Activated CD4-positive, alpha-beta memory T cell treated with anti-CD3 and anti-CD28 coated beads for 36 hours (primary cell): ENCODE measurements at regions of chr20 and their contacts with region 1.

Region 1: GRCh38 chr20:10219452-10219791 is 792 bp downstream of the SNAP25 start:
- DNase-seq: peak; percentile 69
- H3K4me3 Mint-ChIP-seq: no peak overlapping the region
- H3K27ac Mint-ChIP-seq: no peak overlapping the region
- H3K4me1 Mint-ChIP-seq: peaks cover 15% of the 10 kb centered on the region
- H3K27me3 Mint-ChIP-seq: peaks cover 45% of the 10 kb centered on the region

Region 2: DNA sequence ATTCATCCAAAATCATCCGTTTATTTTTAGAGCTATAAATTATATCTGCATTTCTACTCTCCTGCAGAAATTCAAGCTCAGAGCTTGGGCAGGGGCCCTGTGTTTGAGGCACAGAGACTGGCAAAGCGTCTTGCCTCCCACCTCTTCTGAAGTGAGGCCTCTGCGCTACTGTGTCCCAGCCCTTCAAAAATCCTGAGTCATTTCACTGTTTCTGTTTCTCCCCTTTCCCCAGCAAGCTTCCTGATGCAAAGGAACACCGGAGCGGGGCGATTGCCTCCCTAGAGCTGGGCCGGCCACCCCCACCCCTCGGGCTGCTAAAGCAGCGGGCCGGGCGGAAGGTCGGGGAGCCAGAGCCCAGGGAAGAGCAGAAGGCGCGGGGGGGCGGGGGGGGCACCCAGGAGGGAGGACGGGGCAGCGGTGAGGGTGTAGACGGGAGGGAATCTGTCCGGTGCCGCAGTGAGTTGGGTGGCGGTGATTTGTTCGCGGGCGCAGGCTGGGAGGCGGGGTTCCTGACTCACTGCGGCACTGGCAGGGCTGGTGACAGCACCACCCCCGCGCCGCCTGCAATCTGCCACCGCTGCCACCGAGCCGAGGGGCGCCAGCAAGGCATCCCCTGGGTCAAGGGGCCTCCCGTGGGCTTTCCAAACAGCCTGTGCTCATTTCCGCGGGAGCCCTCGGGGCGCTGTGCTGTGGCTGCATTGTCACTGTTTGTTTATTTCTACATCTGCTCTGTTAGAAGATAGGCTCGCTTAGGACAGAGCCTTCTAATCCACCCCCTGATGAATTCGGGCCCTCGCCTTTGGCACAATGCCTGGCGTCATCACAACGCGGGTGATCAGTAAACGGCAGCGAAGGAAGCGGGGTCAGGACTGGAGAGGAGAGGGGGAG is 47.3 kb before region 1 on chr20:
- CTCF ChIA-PET with region 1: no interaction called
- POLR2A ChIA-PET with region 1: no interaction called
- intact Hi-C with region 1: loop called (anchors 2 kb)
- DNase-seq: peak; percentile 61
- H3K4me3 Mint-ChIP-seq: peak overlapping the region; percentile 60
- H3K27ac Mint-ChIP-seq: no peak overlapping the region
- H3K4me1 Mint-ChIP-seq: peaks cover 10% of the 10 kb centered on the region
- H3K27me3 Mint-ChIP-seq: peaks cover 36% of the 10 kb centered on the region

Region 3: GRCh38 chr20:10249048-10249770 is 29.8 kb after region 1 on chr20:
- CTCF ChIA-PET with region 1: no interaction called
- POLR2A ChIA-PET with region 1: no interaction called
- intact Hi-C with region 1: no loop called
- DNase-seq: no peak
- H3K4me3 Mint-ChIP-seq: no peak overlapping the region
- H3K27ac Mint-ChIP-seq: no peak overlapping the region
- H3K4me1 Mint-ChIP-seq: no peaks in the 10 kb centered on the region
- H3K27me3 Mint-ChIP-seq: no peaks in the 10 kb centered on the region

Region 4: GRCh38 chr20:10350188-10350842 is 130.9 kb after region 1 on chr20:
- CTCF ChIA-PET with region 1: no interaction called
- POLR2A ChIA-PET with region 1: no interaction called
- intact Hi-C with region 1: loop called (anchors 2 kb)
- DNase-seq: no peak
- H3K4me3 Mint-ChIP-seq: no peak overlapping the region
- H3K27ac Mint-ChIP-seq: peak overlapping the region; percentile 75
- H3K4me1 Mint-ChIP-seq: peaks cover 30% of the 10 kb centered on the region
- H3K27me3 Mint-ChIP-seq: no peaks in the 10 kb centered on the region

Region 5: GRCh38 chr20:10412591-10413408 is 193.4 kb after region 1 on chr20:
- CTCF ChIA-PET with region 1: no interaction called
- POLR2A ChIA-PET with region 1: no interaction called
- intact Hi-C with region 1: no loop called
- DNase-seq: no peak
- H3K4me3 Mint-ChIP-seq: no peak overlapping the region
- H3K27ac Mint-ChIP-seq: no peak overlapping the region
- H3K4me1 Mint-ChIP-seq: peaks cover 2% of the 10 kb centered on the region
- H3K27me3 Mint-ChIP-seq: no peaks in the 10 kb centered on the region

Region 6: DNA sequence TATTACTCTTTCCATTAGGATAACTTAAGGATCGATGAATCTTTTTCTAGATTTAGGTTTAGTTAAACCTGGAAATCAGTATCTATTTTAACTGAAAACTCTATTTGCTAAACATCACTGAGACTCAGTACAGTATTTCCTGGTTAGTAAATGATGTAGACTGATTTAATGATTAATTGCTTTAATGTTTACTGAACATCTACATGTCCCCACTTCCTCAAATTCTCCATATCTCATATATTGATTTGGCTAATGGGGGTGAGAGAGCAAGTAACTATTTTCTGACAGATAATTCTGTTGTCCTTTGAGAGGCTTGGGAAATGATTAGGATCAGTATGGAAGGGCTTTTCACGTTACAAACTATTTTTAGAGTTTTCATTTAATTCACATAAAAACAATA is 204.3 kb after region 1 on chr20:
- CTCF ChIA-PET with region 1: no interaction called
- POLR2A ChIA-PET with region 1: no interaction called
- intact Hi-C with region 1: no loop called
- DNase-seq: no peak
- H3K4me3 Mint-ChIP-seq: no peak overlapping the region
- H3K27ac Mint-ChIP-seq: no peak overlapping the region
- H3K4me1 Mint-ChIP-seq: peaks cover under 1% of the 10 kb centered on the region
- H3K27me3 Mint-ChIP-seq: no peaks in the 10 kb centered on the region